MCF 10A (cell line): ENCODE measurements at regions of chr6 and their contacts with region 1.

Region 1: DNA sequence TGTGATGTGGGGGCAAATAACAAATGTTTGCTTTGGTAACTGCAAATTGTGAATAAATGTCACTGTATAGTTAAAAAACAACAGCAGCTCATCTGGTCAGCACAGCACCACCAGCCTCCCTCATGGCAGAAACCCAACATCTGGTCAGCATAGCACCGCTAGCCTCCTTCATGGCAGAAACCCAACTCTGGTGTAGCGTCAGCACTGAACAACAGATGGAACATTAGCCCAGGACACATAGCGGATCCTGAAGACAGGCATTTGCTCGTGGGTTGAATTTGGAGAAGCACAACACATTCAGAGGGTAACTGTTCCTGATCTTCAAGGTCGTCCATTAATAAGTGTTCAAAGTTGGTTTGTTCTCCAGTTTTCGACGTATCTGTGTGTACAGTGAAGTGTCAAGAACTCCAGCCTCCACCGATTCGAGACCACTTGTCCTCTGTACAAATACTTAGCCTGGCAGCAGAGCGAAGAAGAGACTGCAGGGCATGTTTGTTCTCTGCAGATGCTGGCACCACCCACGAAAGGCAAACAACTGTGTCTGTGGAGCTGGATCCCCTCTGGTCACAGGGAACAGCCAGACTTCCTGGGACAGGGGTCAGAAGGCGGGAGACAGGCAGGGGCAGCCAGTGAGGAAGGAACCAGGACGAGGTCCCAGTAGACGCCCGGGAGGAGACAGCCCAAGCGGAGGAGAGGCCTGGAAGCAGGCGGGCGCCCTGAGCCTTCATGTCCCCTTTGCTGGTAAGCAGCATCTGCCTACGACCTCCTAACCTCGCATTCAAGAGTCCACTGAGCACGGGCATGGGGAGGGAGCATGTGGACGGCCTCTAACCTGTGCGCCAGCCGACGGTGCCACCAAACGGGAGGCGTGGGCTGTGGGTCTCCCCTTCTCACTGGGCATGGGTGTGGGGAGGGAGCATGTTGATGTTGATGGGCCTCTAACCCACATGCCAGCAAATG is 265.6 kb downstream of the DLL1 start:
- DNase-seq: peak; percentile 65
- H3K4me3 Mint-ChIP-seq: no peak overlapping the region
- H3K27ac Mint-ChIP-seq: no peak overlapping the region
- H3K4me1 Mint-ChIP-seq: peaks cover 34% of the 10 kb centered on the region
- H3K27me3 Mint-ChIP-seq: peaks cover 14% of the 10 kb centered on the region
- CTCF ChIP-seq: no peak

Region 2: GRCh38 chr6:169589293-169589692 is 435.9 kb before region 1 on chr6:
- CTCF ChIA-PET with region 1: no interaction called
- POLR2A ChIA-PET with region 1: no interaction called
- intact Hi-C with region 1: no loop called
- DNase-seq: no peak
- H3K4me3 Mint-ChIP-seq: no peak overlapping the region
- H3K27ac Mint-ChIP-seq: no peak overlapping the region
- H3K4me1 Mint-ChIP-seq: no peaks in the 10 kb centered on the region
- H3K27me3 Mint-ChIP-seq: no peaks in the 10 kb centered on the region
- CTCF ChIP-seq: no peak

Region 3: DNA sequence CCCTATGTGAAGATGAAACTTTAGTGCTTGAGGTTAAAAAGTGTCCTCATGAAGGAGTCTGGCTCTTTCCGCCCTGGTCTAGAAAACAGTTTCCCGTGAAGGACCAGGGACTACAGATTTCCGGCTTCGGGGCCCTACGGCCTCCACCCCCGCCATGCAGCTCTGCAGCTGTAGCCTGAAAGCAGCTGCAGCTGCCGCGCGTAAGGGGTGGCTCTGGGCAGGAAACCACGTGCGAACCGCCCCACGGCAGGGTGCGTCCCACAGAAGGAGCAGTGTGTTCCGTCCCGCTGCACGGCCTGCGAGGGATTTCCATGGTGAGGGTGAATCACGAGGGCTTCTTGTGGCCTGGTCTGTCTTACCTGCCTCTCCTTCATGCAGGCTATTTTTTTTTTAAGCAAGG is 156.8 kb before region 1 on chr6:
- CTCF ChIA-PET with region 1: no interaction called
- POLR2A ChIA-PET with region 1: no interaction called
- intact Hi-C with region 1: no loop called
- DNase-seq: no peak
- H3K4me3 Mint-ChIP-seq: no peak overlapping the region
- H3K27ac Mint-ChIP-seq: no peak overlapping the region
- H3K4me1 Mint-ChIP-seq: no peaks in the 10 kb centered on the region
- H3K27me3 Mint-ChIP-seq: peaks cover 21% of the 10 kb centered on the region
- CTCF ChIP-seq: no peak

Region 4: GRCh38 chr6:169978615-169979513 is 46.4 kb before region 1 on chr6:
- CTCF ChIA-PET with region 1: no interaction called
- POLR2A ChIA-PET with region 1: interaction called, 14 read pairs
- intact Hi-C with region 1: no loop called
- DNase-seq: peak; percentile 83
- H3K4me3 Mint-ChIP-seq: no peak overlapping the region
- H3K27ac Mint-ChIP-seq: peak overlapping the region; percentile 71
- H3K4me1 Mint-ChIP-seq: peaks cover 8% of the 10 kb centered on the region
- H3K27me3 Mint-ChIP-seq: peaks cover 18% of the 10 kb centered on the region
- CTCF ChIP-seq: no peak

Region 5: GRCh38 chr6:170248111-170248805 is 223.0 kb after region 1 on chr6:
- CTCF ChIA-PET with region 1: no interaction called
- POLR2A ChIA-PET with region 1: no interaction called
- intact Hi-C with region 1: no loop called
- DNase-seq: no peak
- H3K4me3 Mint-ChIP-seq: no peak overlapping the region
- H3K27ac Mint-ChIP-seq: no peak overlapping the region
- H3K4me1 Mint-ChIP-seq: peaks cover 7% of the 10 kb centered on the region
- H3K27me3 Mint-ChIP-seq: no peaks in the 10 kb centered on the region
- CTCF ChIP-seq: no peak